A673 (cell line): ENCODE measurements at regions of chr2 and their contacts with region 1.

Region 1: GRCh38 chr2:133498662-133499585 is 69.3 kb downstream of the NCKAP5 start:
- DNase-seq: no peak
- H3K4me3 ChIP-seq: no peak overlapping the region
- H3K27ac ChIP-seq: peak overlapping the region; percentile 99
- H3K4me1 ChIP-seq: peaks cover 91% of the 10 kb centered on the region
- H3K27me3 ChIP-seq: no peaks in the 10 kb centered on the region
- CTCF ChIP-seq: no peak

Region 2: GRCh38 chr2:132547074-132547687 is 951.7 kb before region 1 on chr2:
- CTCF ChIA-PET with region 1: no interaction called
- POLR2A ChIA-PET with region 1: no interaction called
- intact Hi-C with region 1: loop called (anchors 1 kb)
- DNase-seq: peak; percentile 88
- H3K4me3 ChIP-seq: no peak overlapping the region
- H3K27ac ChIP-seq: no peak overlapping the region
- H3K4me1 ChIP-seq: peaks cover 14% of the 10 kb centered on the region
- H3K27me3 ChIP-seq: no peaks in the 10 kb centered on the region
- CTCF ChIP-seq: peak; percentile 82

Region 3: DNA sequence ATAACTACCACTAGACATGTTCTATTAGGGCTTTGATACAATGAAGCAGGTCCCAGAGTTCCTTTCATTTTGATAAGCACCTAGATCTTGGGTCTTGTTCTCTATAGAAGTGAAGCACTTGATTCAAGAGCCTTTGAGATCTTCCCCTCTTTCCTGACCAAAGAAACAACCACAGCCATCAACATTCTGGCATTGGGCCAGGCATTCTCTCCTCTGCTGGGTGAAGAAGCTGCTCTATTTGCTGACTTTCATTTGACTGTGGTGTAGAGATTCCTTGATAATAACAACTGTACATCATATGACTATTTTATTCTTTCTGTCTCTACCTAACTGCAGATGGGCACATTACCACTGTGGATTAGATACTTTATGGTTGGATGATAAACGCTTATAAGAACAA is 732.4 kb before region 1 on chr2:
- CTCF ChIA-PET with region 1: no interaction called
- POLR2A ChIA-PET with region 1: no interaction called
- intact Hi-C with region 1: no loop called
- DNase-seq: no peak
- H3K4me3 ChIP-seq: no peak overlapping the region
- H3K27ac ChIP-seq: no peak overlapping the region
- H3K4me1 ChIP-seq: no peaks in the 10 kb centered on the region
- H3K27me3 ChIP-seq: no peaks in the 10 kb centered on the region
- CTCF ChIP-seq: no peak

Region 4: GRCh38 chr2:133109772-133110171 is 389.2 kb before region 1 on chr2:
- CTCF ChIA-PET with region 1: no interaction called
- POLR2A ChIA-PET with region 1: no interaction called
- intact Hi-C with region 1: no loop called
- DNase-seq: peak; percentile 75
- H3K4me3 ChIP-seq: no peak overlapping the region
- H3K27ac ChIP-seq: no peak overlapping the region
- H3K4me1 ChIP-seq: peaks cover 16% of the 10 kb centered on the region
- H3K27me3 ChIP-seq: no peaks in the 10 kb centered on the region
- CTCF ChIP-seq: no peak

Region 5: DNA sequence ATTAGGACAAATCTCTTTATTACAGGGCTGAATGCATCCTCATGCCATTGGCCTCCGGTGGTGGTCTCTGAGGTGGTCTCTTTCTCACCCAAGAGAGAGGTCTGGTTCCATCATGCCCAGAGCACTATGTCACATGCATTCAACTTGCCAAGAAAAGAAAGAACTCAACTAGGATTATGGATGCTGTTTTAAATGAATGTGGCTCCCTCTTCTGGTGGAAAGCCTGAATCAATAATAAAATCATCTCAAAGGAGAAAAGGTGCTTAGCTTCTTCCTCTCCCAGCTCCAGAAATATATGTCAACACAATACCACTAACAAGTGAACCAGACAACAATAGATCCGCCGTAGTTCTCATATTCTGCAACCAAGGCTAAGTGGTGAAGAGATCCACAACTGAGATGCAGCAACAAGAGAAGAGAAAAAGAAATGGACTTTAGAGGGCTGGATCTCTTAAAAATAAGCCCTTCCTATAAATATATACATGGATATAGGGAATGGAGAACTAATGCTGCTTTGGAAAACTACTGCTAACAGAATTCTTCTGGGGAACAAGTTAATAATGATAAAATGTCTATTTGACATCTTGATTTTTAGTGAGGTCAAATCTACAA is 327.4 kb before region 1 on chr2:
- CTCF ChIA-PET with region 1: no interaction called
- POLR2A ChIA-PET with region 1: no interaction called
- intact Hi-C with region 1: loop called (anchors 5 kb)
- DNase-seq: peak; percentile 89
- H3K4me3 ChIP-seq: no peak overlapping the region
- H3K27ac ChIP-seq: no peak overlapping the region
- H3K4me1 ChIP-seq: peaks cover 60% of the 10 kb centered on the region
- H3K27me3 ChIP-seq: no peaks in the 10 kb centered on the region
- CTCF ChIP-seq: peak; percentile 83

Region 6: GRCh38 chr2:133266041-133266925 is 232.6 kb before region 1 on chr2:
- CTCF ChIA-PET with region 1: interaction called, 10 read pairs
- POLR2A ChIA-PET with region 1: no interaction called
- intact Hi-C with region 1: loop called (anchors 2 kb)
- DNase-seq: peak; percentile 69
- H3K4me3 ChIP-seq: peak overlapping the region; percentile 81
- H3K27ac ChIP-seq: peak overlapping the region; percentile 81
- H3K4me1 ChIP-seq: peaks cover 50% of the 10 kb centered on the region
- H3K27me3 ChIP-seq: no peaks in the 10 kb centered on the region
- CTCF ChIP-seq: peak; percentile 47

Region 7: GRCh38 chr2:133362061-133362476 is 136.9 kb before region 1 on chr2:
- CTCF ChIA-PET with region 1: no interaction called
- POLR2A ChIA-PET with region 1: no interaction called
- intact Hi-C with region 1: loop called (anchors 5 kb)
- DNase-seq: peak; percentile 98
- H3K4me3 ChIP-seq: no peak overlapping the region
- H3K27ac ChIP-seq: peak overlapping the region; percentile 75
- H3K4me1 ChIP-seq: peaks cover 47% of the 10 kb centered on the region
- H3K27me3 ChIP-seq: no peaks in the 10 kb centered on the region
- CTCF ChIP-seq: no peak

Region 8: DNA sequence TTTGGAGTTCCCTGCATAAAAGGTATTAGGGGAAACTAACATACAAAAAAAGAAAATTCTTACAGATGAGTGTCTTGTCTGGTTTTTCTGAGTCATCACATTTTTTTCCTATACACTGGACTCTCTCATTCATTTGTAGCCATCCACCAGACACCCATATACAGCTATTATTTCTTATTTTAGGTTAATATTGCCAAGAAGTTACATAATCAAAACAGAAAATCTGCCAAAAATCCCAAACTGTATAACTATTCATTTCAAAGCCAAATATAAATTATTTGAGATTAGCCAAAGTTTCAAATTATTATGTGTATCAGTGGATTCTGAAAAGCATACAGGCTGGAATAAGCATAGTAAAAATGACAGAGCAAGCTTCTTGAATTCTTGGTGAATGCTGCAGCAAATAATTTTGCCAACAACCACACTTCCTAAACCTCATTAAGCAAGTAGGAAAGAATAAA is 121.9 kb before region 1 on chr2:
- CTCF ChIA-PET with region 1: no interaction called
- POLR2A ChIA-PET with region 1: no interaction called
- intact Hi-C with region 1: no loop called
- DNase-seq: no peak
- H3K4me3 ChIP-seq: no peak overlapping the region
- H3K27ac ChIP-seq: no peak overlapping the region
- H3K4me1 ChIP-seq: peaks cover 12% of the 10 kb centered on the region
- H3K27me3 ChIP-seq: no peaks in the 10 kb centered on the region
- CTCF ChIP-seq: no peak

Region 9: DNA sequence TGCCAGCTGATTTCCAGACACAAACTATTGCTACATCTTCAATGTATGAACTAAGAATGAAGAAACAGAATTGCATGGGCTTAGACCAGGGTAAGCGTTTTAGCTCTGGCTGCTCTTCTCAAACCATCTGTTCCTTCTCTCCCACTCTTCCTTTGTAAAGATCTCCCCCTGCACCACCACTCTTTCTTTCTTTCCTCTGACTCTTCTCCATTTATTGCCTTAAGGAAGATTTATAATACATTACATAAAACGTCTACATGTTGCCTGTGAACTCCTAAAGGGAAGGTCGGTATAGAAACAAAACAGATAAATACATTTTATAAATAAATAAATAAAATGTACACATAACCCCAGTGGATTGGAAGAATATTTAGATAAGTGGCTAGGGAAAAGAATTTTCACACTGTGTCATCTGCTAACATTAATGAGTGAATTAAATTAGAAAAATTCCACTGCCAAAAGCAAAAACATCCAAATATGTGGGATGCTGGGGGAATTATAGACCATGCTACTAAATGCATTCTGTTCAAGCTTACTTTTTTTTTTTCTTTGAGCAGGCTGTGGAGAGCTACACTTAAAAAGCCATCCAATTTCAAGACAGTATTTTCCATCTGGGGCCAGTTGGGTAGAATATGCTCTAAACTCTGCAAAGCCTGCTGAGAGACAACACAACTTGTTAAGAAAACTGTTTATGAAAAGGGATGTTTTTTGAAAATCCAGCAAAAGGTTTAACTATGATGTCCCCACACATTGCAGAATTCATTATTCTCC is 27.8 kb after region 1 on chr2:
- CTCF ChIA-PET with region 1: interaction called, 4 read pairs
- POLR2A ChIA-PET with region 1: interaction called, 18 read pairs
- intact Hi-C with region 1: loop called (anchors 1 kb)
- DNase-seq: peak; percentile 92
- H3K4me3 ChIP-seq: no peak overlapping the region
- H3K27ac ChIP-seq: peak overlapping the region; percentile 98
- H3K4me1 ChIP-seq: peaks cover 73% of the 10 kb centered on the region
- H3K27me3 ChIP-seq: no peaks in the 10 kb centered on the region
- CTCF ChIP-seq: no peak

Region 10: DNA sequence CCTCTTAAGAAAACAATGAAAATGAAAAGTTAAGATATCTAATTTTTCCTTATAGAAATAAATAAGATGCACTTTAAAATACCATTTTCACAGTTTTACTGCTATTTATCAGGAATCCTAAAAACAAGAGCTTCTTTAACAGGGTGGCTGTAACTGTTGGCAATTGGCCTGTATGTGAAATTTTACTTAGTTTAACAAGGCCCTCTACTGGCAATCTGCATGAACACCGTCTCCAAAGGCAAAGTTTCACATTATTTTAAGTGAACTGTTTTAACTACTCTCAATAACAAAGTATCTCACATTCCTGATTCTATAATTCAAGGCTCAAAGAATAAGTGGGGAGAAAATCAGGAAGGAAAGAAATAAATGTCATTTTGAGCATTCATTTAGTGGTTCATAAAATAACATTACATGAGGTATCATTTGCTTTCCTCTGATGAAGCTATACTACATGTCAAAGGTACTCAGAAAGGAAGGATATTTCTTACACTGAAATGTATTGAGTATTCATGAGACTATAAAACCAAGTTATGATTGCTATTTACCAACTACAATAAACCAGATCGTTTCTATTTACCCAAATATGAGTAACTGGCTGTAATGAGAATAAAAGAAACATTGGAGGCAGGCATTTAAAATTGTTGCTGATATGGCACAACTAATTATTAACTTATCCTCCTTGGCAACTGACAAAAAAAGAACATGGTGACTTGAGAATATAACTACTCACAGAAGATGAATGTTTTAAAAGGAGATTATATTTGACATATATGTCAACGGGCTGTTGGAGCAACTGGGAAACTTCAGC is 62.3 kb after region 1 on chr2:
- CTCF ChIA-PET with region 1: interaction called, 13 read pairs
- POLR2A ChIA-PET with region 1: interaction called, 4 read pairs
- intact Hi-C with region 1: loop called (anchors 1 kb)
- DNase-seq: peak; percentile 91
- H3K4me3 ChIP-seq: no peak overlapping the region
- H3K27ac ChIP-seq: peak overlapping the region; percentile 69
- H3K4me1 ChIP-seq: peaks cover 64% of the 10 kb centered on the region
- H3K27me3 ChIP-seq: no peaks in the 10 kb centered on the region
- CTCF ChIP-seq: peak; percentile 89